SK-N-SH (cell line): ENCODE measurements at regions of chr17 and their contacts with region 1.

Region 1: GRCh38 chr17:75632863-75633485 is at the start of gene SMIM5:
- DNase-seq: peak; percentile 98
- H3K4me3 ChIP-seq: no peak within 1 kb of the TSS; a peak in 1 of 4 replicates
- H3K27ac ChIP-seq: peak within 1 kb of the TSS in 1 of 2 experiments; percentile 59; a peak in 3 of 4 replicates
- H3K4me1 ChIP-seq: peaks cover 12 to 15% of the 10 kb centered on the region in 2 experiments; a peak in 3 of 4 replicates
- H3K27me3 ChIP-seq: no peaks in the 10 kb centered on the region
- CTCF ChIP-seq: peak; percentile 99
- EP300 ChIP-seq: no peak
- RAD21 ChIP-seq: peak; percentile 72
- polyA plus RNA-seq, gene SMIM5: 0.02 TPM in 1 of 2 replicates, not detected in the other

Region 2: GRCh38 chr17:75456417-75457046 is 176.4 kb before region 1 on chr17 and contains the start of gene TMEM94:
- CTCF ChIA-PET with region 1: interaction called, 10 read pairs
- POLR2A ChIA-PET with region 1: interaction called, 3 read pairs
- DNase-seq: peak; percentile 98
- H3K4me3 ChIP-seq: peak within 1 kb of the TSS; percentile 74 to 82
- H3K27ac ChIP-seq: peak within 1 kb of the TSS; percentile 90 to 94
- H3K4me1 ChIP-seq: peaks cover 0 to 15% of the 10 kb centered on the region in 2 experiments; a peak in 3 of 4 replicates
- H3K27me3 ChIP-seq: no peaks in the 10 kb centered on the region
- CTCF ChIP-seq: no peak
- EP300 ChIP-seq: no peak
- RAD21 ChIP-seq: no peak
- polyA plus RNA-seq, gene TMEM94: 68.0 and 89.9 TPM in 2 replicates

Region 3: GRCh38 chr17:75589012-75589918 is 43.7 kb before region 1 on chr17:
- CTCF ChIA-PET with region 1: interaction called, 17 read pairs
- POLR2A ChIA-PET with region 1: no interaction called
- DNase-seq: peak; percentile 100
- H3K4me3 ChIP-seq: peak overlapping the region; percentile 62 to 64
- H3K27ac ChIP-seq: peak overlapping the region in 1 of 2 experiments; percentile 53; a peak in 1 of 4 replicates
- H3K4me1 ChIP-seq: peaks cover 0 to 16% of the 10 kb centered on the region in 2 experiments; a peak in 1 of 4 replicates
- H3K27me3 ChIP-seq: no peaks in the 10 kb centered on the region
- CTCF ChIP-seq: peak; percentile 60
- EP300 ChIP-seq: peak in 1 of 2 experiments; percentile 68; a peak in 1 of 4 replicates
- RAD21 ChIP-seq: peak; percentile 34

Region 4: GRCh38 chr17:75619506-75620431 is 13.2 kb before region 1 on chr17:
- CTCF ChIA-PET with region 1: interaction called, 1,189 read pairs
- POLR2A ChIA-PET with region 1: interaction called, 4 read pairs
- DNase-seq: peak; percentile 89
- H3K4me3 ChIP-seq: no peak overlapping the region; a peak in 1 of 4 replicates
- H3K27ac ChIP-seq: no peak overlapping the region
- H3K4me1 ChIP-seq: peaks cover 0 to 24% of the 10 kb centered on the region in 2 experiments; a peak in 1 of 4 replicates
- H3K27me3 ChIP-seq: no peaks in the 10 kb centered on the region
- CTCF ChIP-seq: peak; percentile 73
- EP300 ChIP-seq: no peak
- RAD21 ChIP-seq: peak; percentile 41

Region 5: DNA sequence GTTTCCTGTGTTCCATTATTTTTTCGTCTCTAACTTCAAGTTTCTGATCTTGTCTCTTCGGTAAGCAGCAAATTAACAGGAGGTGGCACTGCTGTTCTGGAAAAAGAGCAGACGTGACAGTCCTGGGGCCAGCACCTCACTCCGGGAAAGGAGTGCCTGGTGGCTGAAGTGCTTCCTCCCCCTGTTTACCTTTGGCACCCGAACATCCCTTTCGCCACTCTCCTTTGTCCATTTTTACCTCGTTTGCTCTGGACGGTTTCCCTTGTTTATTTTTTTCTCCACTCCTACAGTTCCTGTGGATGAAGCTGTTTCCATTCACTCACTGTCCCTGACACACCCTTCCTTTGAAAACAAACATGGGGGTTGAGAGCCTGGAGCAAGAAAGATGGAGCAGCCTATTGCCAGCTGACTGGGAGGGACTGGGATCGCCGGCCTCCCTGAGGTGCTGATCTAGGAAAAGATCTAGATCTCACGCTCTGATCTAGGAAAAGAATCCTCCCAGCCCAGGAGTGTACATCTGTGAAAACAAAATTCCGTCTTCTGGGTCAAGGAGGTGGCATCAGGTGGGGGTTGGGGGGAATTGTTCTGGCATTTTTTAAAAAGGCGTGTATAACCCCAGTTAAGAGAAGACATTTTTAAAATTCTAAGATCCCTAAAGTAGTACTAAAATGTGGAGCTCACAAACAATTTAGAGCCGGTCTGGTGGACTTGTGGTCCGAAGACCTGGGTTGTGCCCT is 46.9 kb after region 1 on chr17:
- CTCF ChIA-PET with region 1: interaction called, 39 read pairs
- POLR2A ChIA-PET with region 1: no interaction called
- DNase-seq: no peak
- H3K4me3 ChIP-seq: no peak overlapping the region
- H3K27ac ChIP-seq: peak overlapping the region in 1 of 2 experiments; percentile 64; a peak in 2 of 4 replicates
- H3K4me1 ChIP-seq: peaks cover 5 to 34% of the 10 kb centered on the region in 2 experiments; a peak in 3 of 4 replicates
- H3K27me3 ChIP-seq: no peaks in the 10 kb centered on the region
- CTCF ChIP-seq: peak; percentile 36
- EP300 ChIP-seq: no peak
- RAD21 ChIP-seq: peak; percentile 28; the same call in 1 of the 2 replicates

Region 6: GRCh38 chr17:75707131-75707571 is 74.2 kb after region 1 on chr17:
- CTCF ChIA-PET with region 1: interaction called, 10 read pairs
- POLR2A ChIA-PET with region 1: no interaction called
- DNase-seq: no peak
- H3K4me3 ChIP-seq: no peak overlapping the region
- H3K27ac ChIP-seq: peak overlapping the region in 1 of 2 experiments; percentile 7; a peak in 2 of 4 replicates
- H3K4me1 ChIP-seq: peaks cover 0 to 17% of the 10 kb centered on the region in 2 experiments; a peak in 2 of 4 replicates
- H3K27me3 ChIP-seq: no peaks in the 10 kb centered on the region
- CTCF ChIP-seq: no peak
- EP300 ChIP-seq: peak in 1 of 2 experiments; percentile 54; a peak in 1 of 4 replicates
- RAD21 ChIP-seq: no peak

Region 7: GRCh38 chr17:75731716-75732498 is 98.9 kb after region 1 on chr17:
- CTCF ChIA-PET with region 1: interaction called, 1,370 read pairs
- POLR2A ChIA-PET with region 1: no interaction called
- DNase-seq: no peak
- H3K4me3 ChIP-seq: no peak overlapping the region
- H3K27ac ChIP-seq: no peak overlapping the region
- H3K4me1 ChIP-seq: no peaks in the 10 kb centered on the region
- H3K27me3 ChIP-seq: no peaks in the 10 kb centered on the region
- CTCF ChIP-seq: no peak
- EP300 ChIP-seq: no peak
- RAD21 ChIP-seq: no peak